Activated B cell treated with CpG ODN at 0.5 μM for 24 hours (primary cell): ENCODE measurements at regions of chr5 and their contacts with region 1.

Region 1: GRCh38 chr5:139392678-139393496 is 2.0 kb downstream of the PROB1 start:
- DNase-seq: peak; percentile 89
- ATAC-seq: peak; percentile 62
- H3K4me3 Mint-ChIP-seq: peak overlapping the region; percentile 94
- H3K27ac Mint-ChIP-seq: peak overlapping the region; percentile 86
- H3K4me1 Mint-ChIP-seq: peaks cover 39% of the 10 kb centered on the region
- H3K27me3 Mint-ChIP-seq: no peaks in the 10 kb centered on the region
- CTCF ChIP-seq: no peak

Region 2: GRCh38 chr5:138824924-138825863 is 567.7 kb before region 1 on chr5:
- CTCF ChIA-PET with region 1: no interaction called
- POLR2A ChIA-PET with region 1: no interaction called
- intact Hi-C with region 1: loop called (anchors 10 kb)
- DNase-seq: no peak
- ATAC-seq: no peak
- H3K4me3 Mint-ChIP-seq: no peak overlapping the region
- H3K27ac Mint-ChIP-seq: no peak overlapping the region
- H3K4me1 Mint-ChIP-seq: no peaks in the 10 kb centered on the region
- H3K27me3 Mint-ChIP-seq: no peaks in the 10 kb centered on the region
- CTCF ChIP-seq: no peak

Region 3: DNA sequence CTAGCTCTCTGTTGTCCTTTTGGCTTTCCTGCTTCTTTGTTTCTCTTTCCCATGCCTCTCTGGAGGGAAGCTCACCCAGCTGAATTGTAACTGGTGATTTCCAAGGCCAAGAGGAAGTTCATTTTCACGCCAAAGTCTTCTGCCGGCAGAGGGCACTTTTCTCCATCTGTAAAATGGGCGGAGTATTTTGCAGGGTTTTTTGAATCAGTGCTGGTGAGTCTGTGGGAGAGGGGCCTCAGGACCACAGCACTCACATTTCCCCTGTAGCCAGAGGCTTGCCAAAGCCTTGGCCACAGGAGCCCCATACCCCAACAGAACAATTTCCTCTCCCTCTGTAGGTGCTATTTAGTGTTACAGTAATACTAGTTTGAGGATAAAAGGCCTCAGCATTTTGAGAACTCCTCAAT is 141.6 kb before region 1 on chr5:
- CTCF ChIA-PET with region 1: interaction called, 4 read pairs
- POLR2A ChIA-PET with region 1: no interaction called
- intact Hi-C with region 1: loop called (anchors 1 kb)
- DNase-seq: no peak
- ATAC-seq: peak; percentile 50
- H3K4me3 Mint-ChIP-seq: no peak overlapping the region
- H3K27ac Mint-ChIP-seq: no peak overlapping the region
- H3K4me1 Mint-ChIP-seq: peaks cover 5% of the 10 kb centered on the region
- H3K27me3 Mint-ChIP-seq: no peaks in the 10 kb centered on the region
- CTCF ChIP-seq: no peak

Region 4: DNA sequence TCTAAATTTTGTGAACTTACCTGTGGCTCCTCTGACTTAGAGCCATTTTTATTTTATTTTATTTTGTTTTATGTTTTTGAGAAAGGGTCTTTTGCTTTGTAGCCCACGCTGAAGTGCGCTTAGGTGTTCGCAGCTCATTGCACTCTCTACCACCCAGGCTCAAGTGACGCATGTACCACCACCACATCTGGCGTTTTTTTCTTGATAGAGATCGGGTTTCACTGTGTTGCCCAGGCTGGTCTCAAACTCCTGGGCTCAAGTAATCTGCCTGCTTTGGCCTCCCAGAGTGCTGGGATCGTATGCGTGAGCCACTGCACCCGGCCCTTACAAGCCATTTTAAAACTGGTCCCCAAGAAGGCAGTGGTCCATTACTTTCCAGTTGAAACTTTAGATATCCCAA is 80.8 kb before region 1 on chr5:
- CTCF ChIA-PET with region 1: no interaction called
- POLR2A ChIA-PET with region 1: interaction called, 11 read pairs
- intact Hi-C with region 1: no loop called
- DNase-seq: no peak
- ATAC-seq: no peak
- H3K4me3 Mint-ChIP-seq: no peak overlapping the region
- H3K27ac Mint-ChIP-seq: no peak overlapping the region
- H3K4me1 Mint-ChIP-seq: peaks cover 62% of the 10 kb centered on the region
- H3K27me3 Mint-ChIP-seq: no peaks in the 10 kb centered on the region
- CTCF ChIP-seq: no peak

Region 5: GRCh38 chr5:139403787-139404483 is 11.0 kb after region 1 on chr5 and contains the start of gene SPATA24:
- CTCF ChIA-PET with region 1: interaction called, 3 read pairs
- POLR2A ChIA-PET with region 1: interaction called, 24 read pairs
- intact Hi-C with region 1: loop called (anchors 1 kb)
- DNase-seq: peak; percentile 93
- ATAC-seq: peak; percentile 84
- H3K4me3 Mint-ChIP-seq: peak within 1 kb of the TSS; percentile 90
- H3K27ac Mint-ChIP-seq: peak within 1 kb of the TSS; percentile 96
- H3K4me1 Mint-ChIP-seq: peaks cover 53% of the 10 kb centered on the region
- H3K27me3 Mint-ChIP-seq: no peaks in the 10 kb centered on the region
- CTCF ChIP-seq: no peak
- total RNA-seq, gene SPATA24: 6.4 and 9.3 TPM in 2 replicates

Region 6: GRCh38 chr5:140239939-140240700 is 847.2 kb after region 1 on chr5:
- CTCF ChIA-PET with region 1: no interaction called
- POLR2A ChIA-PET with region 1: no interaction called
- intact Hi-C with region 1: no loop called
- DNase-seq: peak; percentile 37
- ATAC-seq: peak; percentile 70
- H3K4me3 Mint-ChIP-seq: no peak overlapping the region
- H3K27ac Mint-ChIP-seq: no peak overlapping the region
- H3K4me1 Mint-ChIP-seq: peaks cover 7% of the 10 kb centered on the region
- H3K27me3 Mint-ChIP-seq: no peaks in the 10 kb centered on the region
- CTCF ChIP-seq: no peak